GM10248 (cell line): ENCODE measurements at regions of chr3 and their contacts with region 1.

Region 1: GRCh38 chr3:14261229-14261628 is 82.6 kb downstream of the LSM3 start:
- DNase-seq: peak; percentile 85
- CTCF ChIP-seq: peak; percentile 99

Region 2: GRCh38 chr3:14124615-14125190 is 136.5 kb before region 1 on chr3 and contains the starts of genes CHCHD4 and TMEM43:
- CTCF ChIA-PET with region 1: no interaction called
- POLR2A ChIA-PET with region 1: no interaction called
- DNase-seq: peak; percentile 100
- CTCF ChIP-seq: no peak

Region 3: DNA sequence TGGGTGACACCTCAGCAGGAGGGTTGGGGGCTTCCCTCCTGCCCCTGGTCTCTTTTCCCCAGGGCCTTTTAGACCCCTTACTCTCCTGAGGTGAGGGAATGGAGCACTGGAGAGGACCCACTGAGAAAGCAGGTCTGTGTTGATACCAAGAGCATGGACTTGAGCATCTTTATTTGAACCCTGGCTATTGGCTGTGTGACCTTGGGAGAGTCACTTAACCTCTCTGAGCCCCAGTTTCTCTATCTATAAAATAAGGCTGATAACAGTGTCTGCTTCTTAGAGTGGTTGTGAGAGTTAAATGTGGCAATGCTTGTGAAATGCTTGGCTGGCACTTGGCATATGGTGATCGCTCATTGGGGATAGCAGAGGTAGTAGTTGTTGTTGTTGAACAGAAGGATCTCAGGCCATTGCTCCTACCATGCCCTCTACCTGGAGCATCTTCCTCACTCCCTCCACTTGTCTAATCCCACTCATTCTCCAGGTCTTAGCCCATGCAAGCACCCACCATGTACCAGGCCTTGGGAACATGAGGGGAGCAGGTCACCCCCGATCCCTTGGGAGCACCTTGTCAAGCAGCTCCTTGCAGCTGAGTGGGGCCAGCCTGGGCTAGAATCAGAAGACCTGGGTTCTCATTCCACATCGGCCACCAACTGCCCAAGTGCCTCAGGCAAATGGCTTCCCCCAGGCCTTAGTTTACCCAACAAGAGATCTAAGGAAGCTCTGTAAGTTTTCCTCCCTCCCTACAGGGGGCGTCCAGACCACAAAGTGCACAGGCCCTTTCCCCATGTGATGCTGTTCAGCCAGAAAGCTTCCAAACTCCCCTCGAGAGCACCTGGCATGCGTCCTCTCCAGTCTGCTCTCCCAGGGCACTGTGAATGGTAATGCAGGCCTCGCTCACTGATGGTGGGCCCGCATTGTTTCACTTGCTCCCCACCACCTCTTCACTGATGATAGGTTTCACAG is 14.1 kb after region 1 on chr3:
- CTCF ChIA-PET with region 1: interaction called, 11 read pairs
- POLR2A ChIA-PET with region 1: no interaction called
- DNase-seq: no peak
- CTCF ChIP-seq: peak; percentile 17

Region 4: DNA sequence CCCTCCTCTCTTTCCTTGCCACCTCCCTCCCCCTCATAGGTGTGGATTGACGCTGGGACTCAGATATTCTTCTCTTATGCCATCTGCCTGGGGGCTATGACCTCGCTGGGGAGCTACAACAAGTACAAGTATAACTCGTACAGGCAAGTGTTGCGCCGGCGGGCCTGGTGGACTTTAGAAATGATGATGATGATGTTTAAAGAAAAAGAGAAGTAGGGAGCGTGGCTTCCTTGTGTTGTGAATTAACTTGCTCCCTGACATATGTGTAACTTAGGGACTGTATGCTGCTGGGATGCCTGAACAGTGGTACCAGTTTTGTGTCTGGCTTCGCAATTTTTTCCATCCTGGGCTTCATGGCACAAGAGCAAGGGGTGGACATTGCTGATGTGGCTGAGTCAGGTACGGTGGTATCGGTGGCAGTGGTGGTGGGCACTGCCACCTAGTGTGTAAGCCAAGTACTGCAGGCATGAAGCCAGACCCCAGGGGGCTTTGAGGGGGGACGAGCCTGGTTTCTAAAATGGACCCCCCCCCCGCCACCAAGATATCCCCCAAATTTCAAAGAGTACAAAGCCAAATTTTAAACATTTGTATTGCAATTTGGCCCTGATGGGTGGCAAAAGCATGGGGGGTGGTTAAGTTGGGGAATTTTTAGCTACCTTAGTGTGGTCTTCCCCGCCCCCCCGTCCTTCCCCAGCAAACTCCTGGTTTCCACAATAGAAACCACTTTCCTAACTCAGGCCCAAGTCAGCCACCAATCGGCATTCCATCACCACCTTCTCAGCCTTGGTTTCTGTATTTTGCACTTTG is 206.8 kb after region 1 on chr3:
- CTCF ChIA-PET with region 1: interaction called, 63 read pairs
- POLR2A ChIA-PET with region 1: no interaction called
- DNase-seq: peak; percentile 81
- CTCF ChIP-seq: peak; percentile 83